ENCODE measurements at regions of chr6 and their contacts with region 1.

Region 1: DNA sequence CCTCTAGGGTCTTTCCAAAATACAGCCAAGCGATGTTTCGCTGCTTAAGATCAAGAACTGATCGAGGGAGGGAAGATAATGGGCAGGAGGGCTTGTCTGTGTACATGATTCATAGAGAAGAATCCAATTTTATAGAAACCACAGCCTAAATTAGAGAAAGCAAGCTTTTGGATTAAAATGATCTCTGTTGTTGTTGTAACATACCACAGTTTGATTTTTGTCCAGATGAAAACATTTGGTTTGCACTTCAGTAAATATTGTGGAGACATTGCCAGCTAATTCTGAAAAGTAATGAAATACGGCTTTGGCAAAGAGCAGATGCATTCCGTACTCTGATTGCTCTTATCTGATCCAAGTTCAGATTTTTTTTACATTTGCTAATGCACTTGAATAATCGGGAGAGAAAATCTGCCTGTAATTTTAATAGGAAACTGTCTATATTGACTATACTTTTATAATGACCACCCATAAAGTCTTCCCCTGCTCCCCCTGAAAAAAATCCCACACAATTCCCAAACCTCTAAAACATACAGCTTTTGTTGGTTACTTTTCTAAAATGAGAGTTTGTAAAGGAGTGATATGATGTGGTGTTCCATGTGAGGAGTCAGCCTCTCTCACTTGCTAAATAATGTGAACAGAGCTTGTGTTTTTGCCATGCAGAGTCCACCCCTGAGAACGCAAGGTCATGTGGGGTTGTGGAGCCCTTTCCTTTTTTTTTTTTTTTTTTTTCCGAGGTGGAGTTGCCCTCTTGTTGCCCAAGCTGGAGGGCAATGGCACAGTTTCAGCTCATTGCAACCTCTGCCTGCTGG is 199.9 kb downstream of the DTNBP1 start:
- DNase-seq: peak; percentile 58
- H3K4me3 ChIP-seq: no peak overlapping the region
- H3K27me3 ChIP-seq: no peaks in the 10 kb centered on the region
- CTCF ChIP-seq: no peak

Region 2: DNA sequence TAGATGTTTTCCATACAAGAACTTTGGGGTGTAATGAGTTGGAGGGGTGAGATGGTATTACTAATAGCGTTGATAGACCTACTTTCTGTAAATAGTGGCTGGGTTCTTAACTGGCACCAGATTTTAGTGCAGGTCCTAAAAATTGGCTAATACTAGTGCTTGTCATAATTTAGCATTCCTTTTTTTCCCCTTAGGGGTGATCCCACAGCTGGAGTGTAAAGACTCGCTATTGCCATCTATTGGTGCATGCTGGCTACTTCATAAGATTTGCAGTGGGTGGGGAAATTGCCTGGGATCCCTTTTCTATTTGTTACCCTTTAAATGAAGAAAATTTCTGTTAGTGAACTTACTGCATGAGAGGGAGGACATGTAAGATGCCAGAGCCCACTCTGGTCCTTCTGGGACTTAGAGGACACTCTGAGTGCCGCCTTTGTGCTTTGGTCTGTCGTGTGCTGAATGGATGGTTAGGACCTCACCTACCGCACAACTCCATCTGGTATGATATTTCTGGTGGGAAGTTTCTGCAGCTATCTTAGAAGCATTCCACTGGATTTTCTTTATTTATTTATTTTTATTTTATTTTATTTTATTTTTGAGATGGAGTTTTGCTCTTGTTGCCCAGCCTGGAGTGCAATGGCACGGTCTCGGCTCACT is 21.6 kb before region 1 on chr6:
- CTCF ChIA-PET with region 1: interaction called, 8 read pairs
- POLR2A ChIA-PET with region 1: interaction called, 13 read pairs
- DNase-seq: no peak
- H3K4me3 ChIP-seq: no peak overlapping the region
- H3K27me3 ChIP-seq: no peaks in the 10 kb centered on the region
- CTCF ChIP-seq: peak; percentile 91

Region 3: DNA sequence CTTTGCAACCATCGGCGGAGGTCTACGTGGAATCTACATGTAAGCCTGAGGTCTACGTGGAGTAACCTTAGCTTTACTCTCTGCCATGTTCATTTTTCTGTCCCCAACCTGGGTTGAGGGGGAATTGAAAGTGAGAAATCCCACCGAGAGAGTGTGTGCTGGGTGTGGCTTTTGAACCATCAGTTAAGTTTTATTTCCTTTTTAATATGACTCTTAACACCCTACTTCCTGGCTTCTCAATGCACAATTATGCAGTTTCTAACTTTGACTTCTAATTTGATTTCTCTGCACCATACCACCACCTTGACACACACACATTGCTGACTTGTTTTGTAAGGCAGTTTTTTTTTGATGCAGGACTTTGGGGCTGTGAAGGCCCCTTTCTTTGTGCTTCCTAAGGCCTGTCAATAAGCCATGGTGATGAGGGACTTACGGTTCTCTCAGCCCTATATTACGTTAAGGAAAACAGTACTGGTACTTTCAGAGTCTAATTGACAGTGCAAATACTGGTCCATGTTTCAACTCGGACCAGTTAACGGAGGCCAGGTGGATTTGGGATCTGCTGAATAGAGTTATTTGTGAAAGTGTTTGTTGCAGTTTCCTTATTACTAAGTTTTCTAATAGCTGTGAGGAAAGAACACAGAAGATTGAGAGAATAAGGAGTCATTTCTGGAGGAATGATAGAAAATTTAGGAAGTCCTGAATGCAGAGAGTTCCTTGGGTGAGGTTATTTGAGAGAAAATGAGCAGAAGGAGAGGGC is 10.6 kb before region 1 on chr6:
- CTCF ChIA-PET with region 1: no interaction called
- POLR2A ChIA-PET with region 1: no interaction called
- DNase-seq: no peak
- H3K4me3 ChIP-seq: no peak overlapping the region
- H3K27me3 ChIP-seq: no peaks in the 10 kb centered on the region
- CTCF ChIP-seq: no peak

Measured in BJ (cell line).